Endothelial cell of umbilical vein (primary cell): ENCODE measurements at regions of chr12 and their contacts with region 1.

Region 1: DNA sequence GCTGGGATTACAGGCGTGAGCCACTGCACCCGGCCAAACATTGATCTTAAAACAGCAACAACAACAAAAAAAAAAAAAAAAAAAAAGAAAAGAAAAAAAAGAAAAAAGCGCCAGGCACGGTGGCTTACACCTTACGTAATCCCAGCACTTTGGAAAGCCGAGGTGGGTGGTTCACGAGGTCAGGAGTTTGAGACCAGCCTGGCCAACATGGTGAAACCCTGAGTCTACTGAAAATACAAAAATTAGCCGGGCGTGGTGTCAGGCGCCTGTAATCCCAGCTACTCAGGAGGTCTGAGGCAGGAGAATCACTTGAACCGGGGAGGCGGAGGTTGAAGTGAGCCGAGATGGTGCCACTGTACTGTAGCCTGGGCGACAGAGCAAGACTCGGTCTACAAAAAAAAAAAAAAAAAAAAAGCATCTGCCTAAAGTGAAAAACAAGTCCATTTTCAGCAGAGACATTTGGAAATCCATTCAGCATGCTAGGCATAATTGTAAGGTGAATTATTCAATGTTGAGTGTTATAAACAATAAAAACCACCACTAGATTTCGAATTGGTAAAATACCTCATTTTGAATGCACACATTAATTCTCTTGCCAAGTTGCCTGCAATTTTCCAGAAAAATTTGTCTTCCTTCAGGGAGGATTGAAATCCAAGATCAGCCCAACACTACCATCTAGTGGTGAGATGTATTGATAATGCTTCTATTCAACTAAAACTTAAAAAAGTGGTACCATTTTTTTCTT is 8.0 kb upstream of the CERS5 start:
- DNase-seq: peak; percentile 87
- H3K4me3 ChIP-seq: no peak overlapping the region
- H3K27ac ChIP-seq: no peak overlapping the region
- H3K4me1 ChIP-seq: no peaks in the 10 kb centered on the region
- H3K27me3 ChIP-seq: no peaks in the 10 kb centered on the region
- CTCF ChIP-seq: peak; percentile 27 to 38
- POLR2A ChIP-seq: no peak

Region 2: GRCh38 chr12:50084775-50085614 is 90.1 kb before region 1 on chr12 and contains the start of gene SMARCD1:
- CTCF ChIA-PET with region 1: interaction called, 17 read pairs
- POLR2A ChIA-PET with region 1: no interaction called
- dilution Hi-C with region 1: no loop called
- intact Hi-C with region 1: no loop called
- DNase-seq: peak; percentile 92
- H3K4me3 ChIP-seq: peak within 1 kb of the TSS; percentile 51 to 95 (median 80)
- H3K27ac ChIP-seq: peak within 1 kb of the TSS; percentile 72
- H3K4me1 ChIP-seq: peaks cover 35% of the 10 kb centered on the region
- H3K27me3 ChIP-seq: no peaks in the 10 kb centered on the region
- CTCF ChIP-seq: peak; percentile 50 to 71
- POLR2A ChIP-seq: no peak
- total RNA-seq, gene SMARCD1: 86.6 and 101 TPM in 2 replicates

Region 3: GRCh38 chr12:50103767-50104321 is 71.3 kb before region 1 on chr12 and contains the start of gene GPD1:
- CTCF ChIA-PET with region 1: interaction called, 19 read pairs
- POLR2A ChIA-PET with region 1: interaction called, 3 read pairs
- dilution Hi-C with region 1: no loop called
- intact Hi-C with region 1: no loop called
- DNase-seq: no peak
- H3K4me3 ChIP-seq: no peak within 1 kb of the TSS
- H3K27ac ChIP-seq: no peak within 1 kb of the TSS
- H3K4me1 ChIP-seq: no peaks in the 10 kb centered on the region
- H3K27me3 ChIP-seq: no peaks in the 10 kb centered on the region
- CTCF ChIP-seq: no peak
- POLR2A ChIP-seq: no peak
- total RNA-seq, gene GPD1: 0.48 TPM in 1 of 2 replicates, not detected in the other

Region 4: GRCh38 chr12:50117057-50117622 is 58.0 kb before region 1 on chr12:
- CTCF ChIA-PET with region 1: interaction called, 52 read pairs
- POLR2A ChIA-PET with region 1: no interaction called
- dilution Hi-C with region 1: no loop called
- intact Hi-C with region 1: no loop called
- DNase-seq: no peak
- H3K4me3 ChIP-seq: no peak overlapping the region
- H3K27ac ChIP-seq: no peak overlapping the region
- H3K4me1 ChIP-seq: peaks cover 3% of the 10 kb centered on the region
- H3K27me3 ChIP-seq: no peaks in the 10 kb centered on the region
- CTCF ChIP-seq: no peak
- POLR2A ChIP-seq: no peak

Region 5: GRCh38 chr12:50132505-50133135 is 42.5 kb before region 1 on chr12:
- CTCF ChIA-PET with region 1: interaction called, 47 read pairs
- POLR2A ChIA-PET with region 1: no interaction called
- dilution Hi-C with region 1: no loop called
- intact Hi-C with region 1: loop called (anchors 1 kb)
- DNase-seq: no peak
- H3K4me3 ChIP-seq: no peak overlapping the region
- H3K27ac ChIP-seq: no peak overlapping the region
- H3K4me1 ChIP-seq: peaks cover 4% of the 10 kb centered on the region
- H3K27me3 ChIP-seq: no peaks in the 10 kb centered on the region
- CTCF ChIP-seq: peak in 1 of 2 donors; percentile 46
- POLR2A ChIP-seq: no peak

Region 6: DNA sequence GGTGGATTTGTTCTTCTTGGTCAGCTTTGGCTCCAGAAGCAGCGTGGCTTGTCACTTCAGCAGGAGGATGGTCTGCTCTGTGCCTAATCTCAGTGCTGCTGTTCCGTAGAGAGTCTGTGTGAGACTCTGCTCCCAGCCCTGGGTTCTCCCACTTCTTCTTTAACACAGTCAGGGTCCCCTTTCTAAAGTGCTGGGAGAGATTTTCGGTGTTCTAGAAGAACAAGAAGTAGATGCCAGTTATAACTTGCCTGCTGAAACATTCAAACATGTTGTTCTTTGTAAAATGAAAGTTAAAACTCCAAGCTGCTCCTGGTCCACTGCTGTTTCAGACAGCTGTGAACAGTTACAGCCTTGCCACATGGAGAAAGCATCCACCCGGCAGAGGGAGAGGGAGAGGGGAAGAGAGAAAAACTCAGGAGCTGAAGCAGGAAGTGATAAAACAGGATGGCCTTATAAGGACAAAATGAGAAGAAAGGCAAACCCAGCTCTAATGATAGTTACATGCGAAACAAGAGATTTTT is 47.2 kb after region 1 on chr12:
- CTCF ChIA-PET with region 1: interaction called, 22 read pairs
- POLR2A ChIA-PET with region 1: interaction called, 3 read pairs
- dilution Hi-C with region 1: no loop called
- intact Hi-C with region 1: no loop called
- DNase-seq: peak; percentile 89
- H3K4me3 ChIP-seq: peak overlapping the region; percentile 50 to 99 (median 96)
- H3K27ac ChIP-seq: peak overlapping the region; percentile 77
- H3K4me1 ChIP-seq: peaks cover 23% of the 10 kb centered on the region
- H3K27me3 ChIP-seq: no peaks in the 10 kb centered on the region
- CTCF ChIP-seq: peak in 1 of 2 donors; percentile 11
- POLR2A ChIP-seq: peak; percentile 80

Region 7: DNA sequence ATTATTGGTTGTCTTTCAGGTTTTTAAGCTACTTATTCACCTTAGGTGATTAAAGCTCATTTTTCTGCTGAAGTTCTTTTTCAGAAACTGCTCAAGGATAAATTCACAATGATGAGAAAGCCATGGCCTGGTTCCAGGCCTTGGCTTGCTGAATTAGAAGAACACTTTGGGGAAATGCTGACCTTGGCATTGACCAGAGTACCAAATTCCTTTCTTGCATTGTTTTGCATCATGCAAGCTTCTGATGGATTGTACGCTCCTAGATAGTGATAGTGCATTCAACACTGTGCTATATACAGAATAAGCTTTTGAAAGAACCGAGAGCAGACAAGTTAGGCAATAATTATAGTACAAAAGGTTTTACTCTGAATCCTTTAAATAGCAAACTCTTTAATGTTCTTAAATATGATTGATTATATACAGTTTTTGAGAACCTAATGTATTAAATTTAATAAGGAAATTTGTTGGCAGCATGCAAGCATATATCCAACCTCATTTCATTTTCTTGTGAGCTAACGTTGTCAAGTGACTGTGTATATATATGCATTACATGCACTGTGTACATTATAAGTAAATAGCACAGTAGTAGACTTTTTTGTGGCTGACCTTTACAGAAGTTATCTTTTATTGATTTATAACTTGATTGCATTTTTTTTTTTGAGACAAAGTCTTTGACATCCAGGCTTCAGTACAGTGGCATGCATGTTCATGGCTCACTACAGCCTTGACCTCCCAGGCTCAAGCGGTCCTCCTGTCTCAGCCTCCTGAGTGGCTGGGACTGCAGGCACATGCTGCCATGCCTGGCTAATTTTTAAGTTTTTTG is 428.9 kb after region 1 on chr12:
- CTCF ChIA-PET with region 1: no interaction called
- POLR2A ChIA-PET with region 1: no interaction called
- dilution Hi-C with region 1: no loop called
- intact Hi-C with region 1: no loop called
- DNase-seq: peak; percentile 40
- H3K4me3 ChIP-seq: no peak overlapping the region
- H3K27ac ChIP-seq: no peak overlapping the region
- H3K4me1 ChIP-seq: peaks cover 16% of the 10 kb centered on the region
- H3K27me3 ChIP-seq: no peaks in the 10 kb centered on the region
- CTCF ChIP-seq: no peak
- POLR2A ChIP-seq: no peak